ENCODE measurements at regions of chr2 and their contacts with region 1.

Region 1: GRCh38 chr2:21096458-21096857 is 27.3 kb upstream of the TDRD15 start:
- DNase-seq: no peak
- H3K4me3 ChIP-seq: no peak overlapping the region
- H3K27ac ChIP-seq: no peak overlapping the region
- H3K4me1 ChIP-seq: no peaks in the 10 kb centered on the region
- H3K27me3 ChIP-seq: peaks cover 5% of the 10 kb centered on the region; the same call in 1 of the 2 replicates
- CTCF ChIP-seq: no peak

Region 2: GRCh38 chr2:20913491-20913890 is 183.0 kb before region 1 on chr2:
- CTCF ChIA-PET with region 1: no interaction called
- POLR2A ChIA-PET with region 1: no interaction called
- intact Hi-C with region 1: no loop called
- DNase-seq: no peak
- H3K4me3 ChIP-seq: no peak overlapping the region
- H3K27ac ChIP-seq: no peak overlapping the region
- H3K4me1 ChIP-seq: no peaks in the 10 kb centered on the region
- H3K27me3 ChIP-seq: peaks cover 71% of the 10 kb centered on the region
- CTCF ChIP-seq: no peak

Region 3: DNA sequence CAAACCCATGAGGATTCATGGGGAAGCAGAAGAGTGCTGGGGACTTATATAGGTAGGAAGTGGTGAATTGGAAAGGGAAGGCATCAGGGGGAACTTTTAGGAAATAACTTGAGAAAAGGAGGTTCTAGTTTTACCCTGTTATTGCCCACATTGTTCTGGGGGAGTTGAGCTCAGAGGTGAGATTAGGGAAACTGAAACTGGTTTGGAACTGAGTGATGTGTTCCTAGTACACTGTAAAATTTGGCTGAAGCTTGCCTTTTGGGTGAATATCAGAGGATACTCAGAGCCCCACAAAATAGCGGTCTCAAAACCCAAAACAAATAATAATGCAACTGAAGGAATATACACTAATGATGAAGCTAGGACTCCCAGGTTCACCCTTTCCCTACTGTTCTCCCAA is 13.0 kb before region 1 on chr2:
- CTCF ChIA-PET with region 1: no interaction called
- POLR2A ChIA-PET with region 1: no interaction called
- intact Hi-C with region 1: loop called (anchors 1 kb)
- DNase-seq: no peak
- H3K4me3 ChIP-seq: no peak overlapping the region
- H3K27ac ChIP-seq: no peak overlapping the region
- H3K4me1 ChIP-seq: no peaks in the 10 kb centered on the region
- H3K27me3 ChIP-seq: no peaks in the 10 kb centered on the region
- CTCF ChIP-seq: no peak

Region 4: DNA sequence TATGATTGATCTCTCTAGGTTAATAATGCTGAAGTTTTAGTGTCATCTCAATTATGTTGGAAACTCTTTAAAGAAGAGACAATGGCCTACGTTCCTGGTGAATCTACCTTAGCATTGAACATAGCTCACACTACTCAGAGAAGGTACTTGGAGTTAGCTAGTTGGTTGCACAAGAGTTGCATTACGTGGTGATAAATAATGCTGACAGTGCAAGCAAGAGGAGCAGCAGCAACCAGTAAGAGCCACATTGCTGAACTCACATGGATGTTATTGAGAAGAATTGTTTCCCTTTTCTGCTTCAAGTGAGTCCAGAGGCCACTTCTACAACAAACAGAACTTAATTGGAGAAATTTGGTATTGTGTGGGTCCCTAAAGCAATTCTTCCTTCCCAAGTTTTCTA is 764.4 kb after region 1 on chr2:
- CTCF ChIA-PET with region 1: no interaction called
- POLR2A ChIA-PET with region 1: no interaction called
- intact Hi-C with region 1: no loop called
- DNase-seq: no peak
- H3K4me3 ChIP-seq: no peak overlapping the region
- H3K27ac ChIP-seq: no peak overlapping the region
- H3K4me1 ChIP-seq: no peaks in the 10 kb centered on the region
- H3K27me3 ChIP-seq: no peaks in the 10 kb centered on the region
- CTCF ChIP-seq: no peak